AG04449 (cell line): ENCODE measurements at regions of chr19 and their contacts with region 1.

Region 1: GRCh38 chr19:662962-663681 is at the start of gene RNF126:
- DNase-seq: no peak
- H3K4me3 ChIP-seq: peak within 1 kb of the TSS; percentile 85
- CTCF ChIP-seq: no peak

Region 2: GRCh38 chr19:639253-640160 is 23.6 kb before region 1 on chr19 and contains the start of gene FGF22:
- CTCF ChIA-PET with region 1: no interaction called
- POLR2A ChIA-PET with region 1: no interaction called
- DNase-seq: no peak
- H3K4me3 ChIP-seq: peak within 1 kb of the TSS; percentile 57
- CTCF ChIP-seq: no peak

Region 3: GRCh38 chr19:677201-677600 is 14.1 kb after region 1 on chr19:
- CTCF ChIA-PET with region 1: interaction called, 7 read pairs
- POLR2A ChIA-PET with region 1: interaction called, 10 read pairs
- DNase-seq: no peak
- H3K4me3 ChIP-seq: peak overlapping the region; percentile 78
- CTCF ChIP-seq: no peak

Region 4: GRCh38 chr19:732148-733069 is 69.3 kb after region 1 on chr19:
- CTCF ChIA-PET with region 1: interaction called, 22 read pairs
- POLR2A ChIA-PET with region 1: no interaction called
- DNase-seq: no peak
- H3K4me3 ChIP-seq: no peak overlapping the region
- CTCF ChIP-seq: no peak